ENCODE measurements at regions of chr17 and their contacts with region 1.

Region 1: DNA sequence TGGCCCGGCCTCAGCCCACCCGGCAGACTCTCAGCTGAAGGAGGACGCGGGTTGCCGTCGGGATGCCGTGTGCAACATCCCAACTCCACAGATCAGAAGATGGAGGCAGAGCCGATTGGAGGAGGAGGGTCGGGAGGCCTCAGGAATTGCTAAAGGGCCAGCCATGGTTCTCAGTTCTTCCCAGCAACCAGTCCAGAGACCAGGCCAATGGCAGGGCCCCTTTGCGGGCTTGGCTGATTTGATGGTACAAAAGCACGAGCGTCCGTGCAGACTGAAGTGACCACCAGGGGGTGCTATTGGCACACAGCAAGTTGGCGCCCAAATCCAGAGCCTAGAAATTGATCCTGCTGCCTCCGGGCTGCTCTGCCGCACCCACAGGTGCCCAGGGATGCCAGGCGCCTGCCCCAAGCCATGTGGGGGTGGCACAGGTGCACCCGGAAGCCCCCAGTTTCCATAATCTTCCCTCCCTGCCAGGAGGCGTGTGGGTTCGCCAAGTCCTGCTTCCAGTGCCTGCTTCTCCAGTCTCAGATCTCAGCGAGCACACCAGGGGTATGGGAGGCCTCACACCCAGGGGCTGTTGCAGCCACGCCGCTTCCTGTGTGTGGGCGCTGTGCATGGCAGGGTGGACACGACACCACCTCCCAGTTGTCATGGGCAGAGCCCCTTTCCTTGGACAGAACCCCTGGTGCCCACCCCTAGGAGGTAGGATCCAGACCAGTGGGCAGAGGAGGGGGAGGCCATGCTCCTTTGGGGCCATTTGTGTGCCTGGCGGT is 7.1 kb upstream of the TEX19 start:
- DNase-seq: peak; percentile 77 to 81 (median 79)
- H3K4me3 ChIP-seq: no peak overlapping the region
- H3K4me3 Mint-ChIP-seq: no peak overlapping the region
- H3K27ac ChIP-seq: no peak overlapping the region
- H3K27ac Mint-ChIP-seq: peak overlapping the region in 1 of 7 donors; percentile 83
- H3K4me1 ChIP-seq: no peaks in the 10 kb centered on the region
- H3K4me1 Mint-ChIP-seq: peaks cover 0 to 6% (median 4%) of the 10 kb centered on the region in 4 donors
- H3K27me3 ChIP-seq: no peaks in the 10 kb centered on the region
- H3K27me3 Mint-ChIP-seq: peaks cover 2 to 10% of the 10 kb centered on the region in 2 donors

Region 2: DNA sequence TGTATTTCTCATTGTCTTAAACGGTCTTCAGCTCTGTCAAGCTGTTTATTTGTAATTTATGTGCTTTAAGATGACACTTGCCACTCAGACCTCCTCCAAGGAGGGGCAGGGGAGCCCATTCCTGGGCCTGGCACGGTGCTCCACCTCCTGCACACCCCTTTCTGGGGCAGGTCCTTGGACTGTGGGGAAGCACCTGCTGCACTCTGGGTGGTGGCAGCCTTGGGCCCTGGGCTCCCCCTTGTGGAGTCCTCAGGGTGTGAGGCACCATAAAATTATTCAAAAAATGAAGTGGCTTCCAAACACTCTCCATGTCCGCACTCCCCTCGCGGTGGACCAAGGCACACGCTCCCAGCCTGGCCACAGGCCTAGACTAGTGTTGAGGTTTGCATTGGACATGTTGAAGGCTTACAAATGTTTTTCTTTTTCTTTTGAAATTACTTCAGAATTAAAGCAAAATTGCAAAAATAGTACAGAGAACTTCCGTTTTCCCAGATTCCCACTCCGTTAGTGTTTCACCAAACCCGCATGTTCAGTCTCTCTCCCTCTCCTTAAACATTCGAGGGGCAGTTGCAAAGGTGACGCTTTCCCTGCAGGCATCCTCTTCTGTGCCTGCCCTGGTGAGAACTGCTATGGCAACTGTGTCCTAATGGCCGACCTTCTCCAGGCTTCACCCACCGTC is 200.0 kb after region 1 on chr17:
- CTCF ChIA-PET with region 1: interaction called, 18 read pairs
- POLR2A ChIA-PET with region 1: no interaction called
- intact Hi-C with region 1: loop called (anchors 1 kb)
- DNase-seq: peak; percentile 72 to 82 (median 76)
- H3K4me3 ChIP-seq: no peak overlapping the region
- H3K4me3 Mint-ChIP-seq: peak overlapping the region in 1 of 8 donors; percentile 24
- H3K27ac ChIP-seq: no peak overlapping the region
- H3K27ac Mint-ChIP-seq: peak overlapping the region; percentile 32 to 79 (median 57)
- H3K4me1 ChIP-seq: peaks cover 18% of the 10 kb centered on the region
- H3K4me1 Mint-ChIP-seq: peaks cover 24 to 55% (median 33%) of the 10 kb centered on the region in 4 donors
- H3K27me3 ChIP-seq: no peaks in the 10 kb centered on the region
- H3K27me3 Mint-ChIP-seq: no peaks in the 10 kb centered on the region

Region 3: DNA sequence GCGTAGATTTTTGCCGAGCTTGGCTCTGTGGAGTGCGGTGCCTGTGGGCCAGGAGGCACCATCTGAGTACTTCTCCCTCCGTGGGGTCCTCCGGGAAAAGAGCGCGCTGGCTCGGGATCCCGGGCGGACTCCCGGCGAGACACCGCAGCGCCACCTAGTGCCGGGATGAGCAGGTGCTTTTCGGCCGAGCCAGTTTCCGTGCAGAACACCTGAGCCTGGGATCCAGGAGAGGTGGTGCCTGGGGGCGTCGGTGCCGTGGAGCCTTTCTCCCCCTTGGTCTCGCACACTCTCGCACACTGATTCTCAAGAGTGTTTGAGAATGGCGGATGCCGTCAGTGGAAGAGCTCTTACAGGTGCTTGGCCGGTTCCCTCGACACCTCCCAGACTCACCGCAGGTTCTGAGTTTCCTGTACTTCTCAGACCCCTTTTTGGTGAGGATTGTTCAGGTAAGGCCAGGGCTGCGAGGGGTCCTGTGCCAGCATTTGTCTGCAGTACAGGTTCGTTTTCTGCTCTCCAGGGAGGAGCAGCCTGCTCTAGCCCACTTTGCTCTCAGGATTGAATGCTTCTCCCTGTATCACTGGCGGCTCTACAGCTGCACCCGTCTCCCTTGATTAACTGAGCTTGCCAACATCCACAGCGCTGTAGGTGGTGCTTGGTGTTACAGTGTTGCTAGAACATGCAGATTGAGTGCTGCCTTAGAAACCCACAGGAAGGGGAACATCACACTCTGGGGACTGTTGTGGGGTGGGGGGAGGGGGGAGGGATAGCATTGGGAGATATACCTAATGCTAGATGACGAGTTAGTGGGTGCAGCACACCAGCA is 423.3 kb after region 1 on chr17:
- CTCF ChIA-PET with region 1: no interaction called
- POLR2A ChIA-PET with region 1: no interaction called
- intact Hi-C with region 1: loop called (anchors 10 kb)
- DNase-seq: peak in 1 of 5 donors; percentile 31
- H3K4me3 ChIP-seq: no peak overlapping the region
- H3K4me3 Mint-ChIP-seq: peak overlapping the region in 2 of 8 donors; percentile 29 to 69
- H3K27ac ChIP-seq: no peak overlapping the region
- H3K27ac Mint-ChIP-seq: peak overlapping the region in 2 of 7 donors; percentile 41 to 77
- H3K4me1 ChIP-seq: peaks cover 9% of the 10 kb centered on the region
- H3K4me1 Mint-ChIP-seq: peaks cover 6 to 11% (median 11%) of the 10 kb centered on the region in 4 donors
- H3K27me3 ChIP-seq: no peaks in the 10 kb centered on the region
- H3K27me3 Mint-ChIP-seq: no peaks in the 10 kb centered on the region

Measured in CD4-positive, alpha-beta memory T cell (primary cell).